Heart left ventricle (tissue), 16 donors: ENCODE measurements at regions of chr9 and their contacts with region 1.

Region 1: GRCh38 chr9:34252670-34253459 is 74.0 kb downstream of the UBAP1 start:
- DNase-seq: peak in 4 of 5 donors; percentile 63 to 73 (median 71)
- ATAC-seq: peak; percentile 25 to 61 (median 43)
- H3K4me3 ChIP-seq: peak overlapping the region in 1 of 12 donors; percentile 4
- H3K27ac ChIP-seq: peak overlapping the region; percentile 57 to 86 (median 79)
- H3K4me1 ChIP-seq: peaks cover 0 to 76% (median 49%) of the 10 kb centered on the region in 12 donors
- H3K27me3 ChIP-seq: no peaks in the 10 kb centered on the region
- CTCF ChIP-seq: peak; percentile 52 to 98 (median 92)
- POLR2A ChIP-seq: no peak

Region 2: DNA sequence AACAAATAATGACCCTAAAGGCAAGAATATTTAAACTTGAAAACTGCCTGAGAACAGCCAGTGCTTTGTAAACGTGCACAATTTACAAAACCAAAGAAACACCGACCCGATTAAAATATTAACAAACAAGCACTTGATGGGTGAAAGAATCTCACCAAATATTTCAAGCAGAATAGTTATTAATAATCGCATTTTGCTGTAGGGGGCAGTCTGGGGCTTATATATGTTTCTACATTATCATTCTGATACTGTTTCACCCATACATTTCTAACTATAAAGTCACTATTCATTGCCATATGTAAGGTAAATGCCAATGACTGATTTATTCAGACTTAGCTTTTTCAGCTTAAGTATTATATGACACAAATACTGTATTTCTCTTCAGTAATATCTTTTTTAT is 241.9 kb before region 1 on chr9:
- intact Hi-C with region 1: loop called in 2 of 10 experiments (anchors 1 to 10 kb)
- DNase-seq: no peak
- ATAC-seq: no peak
- H3K4me3 ChIP-seq: no peak overlapping the region
- H3K27ac ChIP-seq: no peak overlapping the region
- H3K4me1 ChIP-seq: no peaks in the 10 kb centered on the region
- H3K27me3 ChIP-seq: no peaks in the 10 kb centered on the region
- CTCF ChIP-seq: peak in 9 of 12 donors; percentile 16 to 42 (median 40)
- POLR2A ChIP-seq: no peak

Region 3: DNA sequence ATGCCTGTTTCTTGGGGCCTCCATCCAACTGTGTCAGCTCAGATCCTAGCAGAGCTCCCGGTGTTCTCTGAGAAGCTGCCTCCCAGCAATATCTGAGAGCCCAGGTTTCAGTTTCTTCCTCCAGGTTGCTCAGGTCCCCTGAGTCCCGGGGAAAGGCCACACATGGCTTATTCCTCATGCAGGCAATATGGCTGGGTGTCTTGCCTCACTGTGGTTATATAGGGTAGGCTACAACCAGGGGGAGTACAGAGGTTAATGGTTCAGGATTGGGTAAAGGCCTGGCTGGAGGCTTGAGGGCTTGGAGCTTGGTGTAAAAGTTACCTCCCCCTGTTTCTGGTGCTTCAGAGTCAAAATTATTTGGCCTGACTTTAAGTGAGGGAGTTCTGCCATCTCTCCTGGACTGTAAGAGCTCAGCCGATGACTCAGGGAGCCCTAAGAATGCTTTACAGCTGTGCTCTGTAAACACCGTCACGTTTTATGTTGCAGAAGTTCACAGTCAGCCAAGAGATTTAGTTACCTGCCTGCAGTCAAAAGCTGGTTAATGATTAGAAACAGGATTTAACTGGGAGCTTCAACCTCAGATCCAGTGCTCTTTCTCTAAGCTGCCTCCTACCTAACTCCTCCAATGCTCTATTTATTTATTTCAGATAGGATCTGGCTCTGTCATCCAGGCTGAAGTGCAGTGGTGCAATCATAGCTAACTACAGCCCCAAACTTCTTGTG is 179.8 kb before region 1 on chr9:
- intact Hi-C with region 1: loop called in 1 of 10 experiments (anchors 5 kb)
- DNase-seq: no peak
- ATAC-seq: peak in 3 of 4 donors; percentile 21 to 71 (median 63)
- H3K4me3 ChIP-seq: no peak overlapping the region
- H3K27ac ChIP-seq: peak overlapping the region in 1 of 12 donors; percentile 32
- H3K4me1 ChIP-seq: peaks cover 0 to 8% (median 0%) of the 10 kb centered on the region in 12 donors
- H3K27me3 ChIP-seq: no peaks in the 10 kb centered on the region
- CTCF ChIP-seq: no peak
- POLR2A ChIP-seq: no peak

Region 4: DNA sequence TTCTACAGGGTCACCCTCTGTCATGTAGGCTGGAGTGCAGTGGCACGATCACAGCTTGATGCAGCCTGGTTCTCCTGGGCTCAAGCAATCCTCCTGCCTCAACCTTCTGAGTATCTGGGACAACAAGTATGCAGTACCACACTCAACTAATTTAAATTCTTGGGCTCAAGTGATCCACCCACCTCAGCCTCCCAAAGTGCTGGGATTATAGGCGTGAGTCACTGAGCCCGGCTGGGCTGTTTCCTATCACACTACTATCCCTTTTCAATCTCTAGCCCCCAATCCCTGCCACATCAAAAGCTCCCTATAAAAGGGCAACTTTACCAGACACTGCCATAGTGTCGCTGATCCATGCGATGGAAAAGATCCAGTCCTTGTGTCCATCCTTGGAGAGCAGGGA is 146.8 kb before region 1 on chr9:
- intact Hi-C with region 1: no loop called
- DNase-seq: no peak
- ATAC-seq: no peak
- H3K4me3 ChIP-seq: no peak overlapping the region
- H3K27ac ChIP-seq: no peak overlapping the region
- H3K4me1 ChIP-seq: peaks cover 0 to 14% (median 5%) of the 10 kb centered on the region in 12 donors
- H3K27me3 ChIP-seq: no peaks in the 10 kb centered on the region
- CTCF ChIP-seq: no peak
- POLR2A ChIP-seq: no peak

Region 5: DNA sequence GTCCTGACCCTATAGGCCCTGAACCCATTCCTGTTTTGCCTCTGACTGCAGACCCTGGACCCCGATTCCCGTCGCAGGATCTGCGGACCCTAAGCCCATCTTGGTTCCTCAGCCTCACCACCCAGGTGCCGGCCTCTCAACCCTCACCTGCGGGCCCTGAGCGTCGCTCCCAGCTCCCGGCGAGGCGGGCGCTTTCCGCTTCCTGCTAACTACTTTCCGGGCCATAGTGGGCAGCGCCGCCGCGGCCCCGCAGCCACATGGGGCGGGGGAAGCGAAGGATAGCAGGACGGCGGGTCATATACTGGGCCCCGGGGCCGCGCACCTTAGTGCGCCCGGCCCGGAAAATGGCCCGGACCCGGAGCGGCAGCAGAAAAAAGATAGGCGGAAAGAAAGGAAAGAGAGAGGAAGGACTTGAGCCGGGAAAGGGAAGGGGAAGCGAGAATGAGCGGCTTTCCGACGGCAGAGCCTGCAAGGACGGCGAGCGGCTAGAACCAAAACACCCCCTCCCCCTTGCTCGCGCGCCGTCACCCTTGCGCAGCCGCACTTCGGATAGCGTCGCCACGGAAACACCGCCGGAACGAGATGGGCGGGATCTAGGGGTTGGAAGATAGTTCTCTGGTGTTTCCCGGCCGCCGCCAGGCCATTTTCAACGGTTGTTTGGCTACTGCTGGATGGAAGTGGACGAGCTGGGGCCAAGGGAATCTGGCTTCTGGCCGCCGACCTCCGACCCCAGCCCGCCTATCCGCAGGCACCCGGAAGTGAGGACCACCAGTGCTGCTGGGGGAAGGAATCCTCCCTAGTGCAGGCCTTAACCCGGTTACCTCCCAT is 126.4 kb before region 1 on chr9 and contains the start of gene DCAF12:
- intact Hi-C with region 1: loop called (anchors 2 to 10 kb)
- DNase-seq: peak; percentile 93 to 95 (median 93)
- ATAC-seq: peak; percentile 96 to 99 (median 99)
- H3K4me3 ChIP-seq: peak within 1 kb of the TSS; percentile 51 to 98 (median 85)
- H3K27ac ChIP-seq: peak within 1 kb of the TSS; percentile 75 to 99 (median 90)
- H3K4me1 ChIP-seq: peaks cover 6 to 49% (median 41%) of the 10 kb centered on the region in 12 donors
- H3K27me3 ChIP-seq: no peaks in the 10 kb centered on the region
- CTCF ChIP-seq: peak in 3 of 12 donors; percentile 13 to 23 (median 22)
- POLR2A ChIP-seq: peak in 1 of 2 donors; percentile 67
- total RNA-seq, gene DCAF12: 14.2 to 29.4 (median 16.7) TPM

Region 6: GRCh38 chr9:34328987-34329832 is 76.3 kb after region 1 on chr9 and contains the starts of genes KIF24 and NUDT2:
- intact Hi-C with region 1: loop called in 2 of 10 experiments (anchors 5 to 10 kb)
- DNase-seq: peak; percentile 96 to 99 (median 98)
- ATAC-seq: peak; percentile 97 to 98 (median 98)
- H3K4me3 ChIP-seq: peak within 1 kb of the TSS; percentile 47 to 88 (median 80)
- H3K27ac ChIP-seq: peak within 1 kb of the TSS; percentile 88 to 96 (median 91)
- H3K4me1 ChIP-seq: peaks cover 0 to 35% (median 14%) of the 10 kb centered on the region in 12 donors
- H3K27me3 ChIP-seq: no peaks in the 10 kb centered on the region
- CTCF ChIP-seq: peak in 4 of 12 donors; percentile 7 to 33 (median 10)
- POLR2A ChIP-seq: peak in 1 of 2 donors; percentile 88
- total RNA-seq, gene KIF24: 0.25 to 1.6 (median 0.67) TPM
- total RNA-seq, gene NUDT2: 14.1 to 21.3 (median 17.2) TPM